ENCODE measurements at regions of chr12 and their contacts with region 1.

Region 1: GRCh38 chr12:114684098-114684869 is at the start of gene TBX3:
- DNase-seq: peak; percentile 95
- H3K4me3 ChIP-seq: peak within 1 kb of the TSS; percentile 78 to 96
- H3K27ac ChIP-seq: peak within 1 kb of the TSS; percentile 96
- H3K4me1 ChIP-seq: peaks cover 0 to 15% of the 10 kb centered on the region in 2 experiments; a peak in 2 of 4 replicates
- H3K27me3 ChIP-seq: no peaks in the 10 kb centered on the region; the same call in 1 of the 2 replicates
- CTCF ChIP-seq: peak; percentile 57
- EP300 ChIP-seq: no peak; a peak in 2 of 4 replicates
- RAD21 ChIP-seq: peak; percentile 62
- polyA plus RNA-seq, gene TBX3: 10.2 and 11.3 TPM in 2 replicates

Region 2: DNA sequence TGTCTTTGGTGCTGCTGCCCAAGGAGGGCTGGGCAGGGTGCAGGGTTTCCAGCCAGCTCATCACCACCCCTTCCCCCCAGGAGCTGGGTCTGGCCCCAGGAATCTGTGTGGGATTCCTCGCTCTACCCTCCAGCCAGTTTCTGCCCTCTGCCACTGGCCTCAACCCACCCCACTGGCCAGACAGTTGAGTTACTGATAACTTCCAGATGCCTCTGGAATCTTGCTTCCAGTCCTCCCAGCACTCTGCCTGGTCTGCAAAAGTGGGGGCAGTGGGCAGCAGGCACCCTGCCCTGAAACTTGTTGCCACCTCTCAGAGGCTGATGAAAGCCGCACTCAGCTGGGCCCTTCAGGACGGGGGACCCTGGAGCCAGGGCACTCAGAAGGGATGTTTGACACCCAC is 19.8 kb after region 1 on chr12:
- CTCF ChIA-PET with region 1: interaction called, 5 read pairs
- POLR2A ChIA-PET with region 1: interaction called, 10 read pairs
- DNase-seq: peak; percentile 86
- H3K4me3 ChIP-seq: no peak overlapping the region
- H3K27ac ChIP-seq: peak overlapping the region in 1 of 2 experiments; percentile 62; a peak in 2 of 4 replicates
- H3K4me1 ChIP-seq: peaks cover 3 to 17% of the 10 kb centered on the region in 2 experiments; a peak in 2 of 4 replicates
- H3K27me3 ChIP-seq: no peaks in the 10 kb centered on the region; the same call in 1 of the 2 replicates
- CTCF ChIP-seq: no peak
- EP300 ChIP-seq: peak; percentile 84 to 89
- RAD21 ChIP-seq: peak; percentile 22

Region 3: GRCh38 chr12:115166698-115167315 is 482.5 kb after region 1 on chr12:
- CTCF ChIA-PET with region 1: interaction called, 18 read pairs
- POLR2A ChIA-PET with region 1: interaction called, 5 read pairs
- DNase-seq: no peak
- H3K4me3 ChIP-seq: no peak overlapping the region
- H3K27ac ChIP-seq: no peak overlapping the region
- H3K4me1 ChIP-seq: no peaks in the 10 kb centered on the region; a peak in 1 of 4 replicates
- H3K27me3 ChIP-seq: no peaks in the 10 kb centered on the region
- CTCF ChIP-seq: peak; percentile 39
- EP300 ChIP-seq: no peak
- RAD21 ChIP-seq: peak; percentile 64

Region 4: DNA sequence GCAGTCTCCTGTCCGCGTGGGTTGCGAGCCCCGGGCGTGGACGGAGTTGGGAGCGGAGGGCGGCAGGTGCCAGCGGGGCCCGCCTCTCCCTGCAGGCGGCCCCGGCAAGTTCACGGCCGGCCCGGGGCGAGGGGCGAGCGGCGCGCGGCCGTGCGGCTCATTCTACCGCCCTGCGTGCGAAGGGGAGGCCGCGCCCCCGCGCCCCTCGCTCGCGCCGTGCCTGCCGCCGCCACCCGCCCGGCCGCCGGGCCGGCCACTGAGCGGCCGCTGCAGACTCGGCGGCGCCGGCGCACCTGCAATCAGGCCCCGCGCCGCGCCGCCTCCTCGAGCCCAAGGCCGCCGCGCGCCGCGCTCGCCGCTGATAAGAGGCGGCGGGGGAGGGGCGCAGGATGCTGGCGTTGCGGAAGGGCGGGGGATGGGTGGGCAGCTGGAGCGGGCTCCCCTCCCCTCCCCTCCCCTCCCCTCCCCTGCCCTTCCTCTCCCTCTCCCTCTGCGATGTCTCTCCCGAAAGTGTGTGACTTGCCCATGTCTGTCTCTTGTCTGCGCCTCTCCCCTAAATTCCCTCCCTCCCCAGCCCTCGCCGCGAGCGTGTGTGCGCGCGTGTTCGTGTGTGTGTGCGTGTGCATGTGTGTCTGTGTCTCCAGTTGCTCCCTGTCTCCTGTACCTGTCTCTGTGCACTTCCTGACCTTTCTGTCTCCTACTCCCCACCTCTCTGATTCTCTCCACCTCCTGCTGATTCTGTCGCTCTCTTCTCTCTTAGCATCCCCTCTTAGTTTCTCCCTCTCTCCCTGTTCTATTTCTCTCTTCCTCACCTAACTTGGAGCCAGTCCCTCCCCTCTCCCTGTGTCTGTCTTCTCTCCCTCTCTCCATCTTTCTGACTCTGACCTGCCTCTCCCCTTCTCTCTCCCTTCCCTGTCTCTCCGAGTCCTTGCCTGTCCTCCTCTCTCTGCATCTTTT is 767.8 kb after region 1 on chr12:
- CTCF ChIA-PET with region 1: interaction called, 30 read pairs
- POLR2A ChIA-PET with region 1: interaction called, 25 read pairs
- DNase-seq: peak; percentile 88
- H3K4me3 ChIP-seq: peak overlapping the region; percentile 47 to 59
- H3K27ac ChIP-seq: peak overlapping the region in 1 of 2 experiments; percentile 79; a peak in 2 of 4 replicates
- H3K4me1 ChIP-seq: peaks cover 5 to 44% of the 10 kb centered on the region in 2 experiments; a peak in 2 of 4 replicates
- H3K27me3 ChIP-seq: no peaks in the 10 kb centered on the region
- CTCF ChIP-seq: no peak
- EP300 ChIP-seq: peak in 1 of 2 experiments; percentile 64; a peak in 2 of 4 replicates
- RAD21 ChIP-seq: 0 out of 2 replicates have a peak, but pooled peaks have one; percentile 1

Measured in SK-N-SH (cell line).